HepG2 (cell line): ENCODE measurements at regions of chr16 and their contacts with region 1.

Region 1: DNA sequence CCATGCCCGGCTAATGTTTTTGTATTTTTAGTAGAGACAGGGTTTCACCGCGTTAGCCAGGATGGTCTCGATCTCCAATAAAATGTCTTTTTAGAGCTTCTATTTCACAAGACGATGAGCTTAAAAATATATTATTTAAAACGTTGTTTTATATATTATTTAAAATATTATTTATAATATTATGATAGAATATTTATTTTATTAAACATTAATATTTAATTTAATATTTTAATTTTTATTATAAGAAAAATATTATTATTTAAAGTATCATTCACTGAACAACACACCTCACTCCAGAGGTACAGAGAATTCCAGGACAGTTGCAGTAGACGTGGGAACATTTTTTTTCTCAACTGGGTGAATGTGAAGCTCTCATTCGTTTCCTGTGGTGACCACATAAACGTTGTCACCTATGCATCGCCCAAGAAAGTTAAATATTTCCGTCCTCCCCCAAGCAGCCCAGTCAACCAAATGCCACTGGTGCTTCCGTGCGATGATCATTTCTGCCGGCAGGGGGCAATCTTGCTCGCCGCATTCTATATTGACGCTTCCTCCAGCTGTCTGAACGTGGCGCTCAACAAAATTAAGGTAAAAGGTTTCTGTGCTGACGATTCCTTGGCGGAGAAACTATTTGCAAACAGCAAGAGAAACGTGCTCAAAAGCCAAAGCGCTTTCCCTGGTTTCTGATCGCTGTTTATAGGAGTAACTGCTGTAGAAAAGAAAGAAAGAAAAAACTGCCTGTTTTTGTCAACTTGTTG is 41.7 kb upstream of the PRSS54 start:
- DNase-seq: peak; percentile 78
- ATAC-seq: peak; percentile 87
- H3K4me3 ChIP-seq: peak overlapping the region in 2 of 3 experiments; percentile 30 to 42; a peak in 2 of 6 replicates
- H3K27ac ChIP-seq: no peak overlapping the region
- H3K4me1 ChIP-seq: peaks cover 18% of the 10 kb centered on the region
- H3K27me3 ChIP-seq: no peaks in the 10 kb centered on the region
- CTCF ChIP-seq: peak; percentile 94
- EP300 ChIP-seq: no peak
- POLR2A ChIP-seq: no peak
- RAD21 ChIP-seq: peak; percentile 90

Region 2: DNA sequence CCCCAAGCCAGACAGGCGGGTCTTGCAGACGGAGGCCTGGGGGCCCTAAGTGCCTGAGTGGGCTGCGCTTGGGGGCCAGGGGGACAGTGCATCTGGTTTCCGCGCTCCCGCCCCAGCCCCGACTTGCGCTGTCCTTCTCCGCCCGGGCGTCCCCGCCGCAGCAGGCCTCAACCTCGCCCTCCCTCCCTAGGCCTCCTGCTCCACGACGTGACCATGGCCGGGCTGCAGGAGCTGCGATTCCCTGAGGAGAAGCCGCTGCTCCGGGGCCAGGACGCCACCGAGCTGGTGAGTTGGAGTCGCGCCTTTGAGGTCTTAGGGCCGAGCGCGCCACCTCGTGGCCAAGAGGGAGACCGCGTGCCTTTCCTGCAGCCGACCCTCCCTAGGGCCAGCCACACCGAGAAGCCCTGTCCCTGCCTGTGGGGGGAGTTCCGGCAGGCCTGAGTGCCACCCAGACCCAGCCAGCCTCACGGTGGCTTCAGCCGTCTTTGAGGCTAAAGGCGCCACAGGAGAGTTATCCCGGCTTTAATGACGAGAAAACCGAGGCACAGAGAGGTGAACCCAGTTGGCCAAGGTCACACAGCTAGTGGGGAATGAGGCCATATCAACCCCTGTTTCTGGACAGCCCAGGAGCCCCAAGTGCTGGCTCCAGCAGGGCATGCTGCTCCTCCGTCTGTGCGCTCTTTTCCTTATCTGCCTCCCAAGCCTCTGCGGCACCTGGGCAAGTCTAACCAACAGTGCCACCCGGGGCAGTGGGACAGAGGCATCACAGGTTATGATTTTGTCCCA is 151.2 kb after region 1 on chr16:
- CTCF ChIA-PET with region 1: interaction called, 66 read pairs
- POLR2A ChIA-PET with region 1: interaction called, 4 read pairs
- in situ Hi-C with region 1: loop called (anchors 5 kb)
- intact Hi-C with region 1: loop called (anchors 1 kb)
- DNase-seq: peak; percentile 71
- ATAC-seq: peak; percentile 95
- H3K4me3 ChIP-seq: no peak overlapping the region
- H3K27ac ChIP-seq: no peak overlapping the region
- H3K4me1 ChIP-seq: no peaks in the 10 kb centered on the region
- H3K27me3 ChIP-seq: peaks cover 2 to 14% of the 10 kb centered on the region in 2 experiments; a peak in 3 of 5 replicates
- CTCF ChIP-seq: peak; percentile 100
- EP300 ChIP-seq: no peak
- POLR2A ChIP-seq: no peak
- RAD21 ChIP-seq: peak; percentile 99

Region 3: GRCh38 chr16:58629572-58630104 is 293.1 kb after region 1 on chr16 and contains the start of gene CNOT1:
- CTCF ChIA-PET with region 1: no interaction called
- POLR2A ChIA-PET with region 1: no interaction called
- in situ Hi-C with region 1: loop called (anchors 10 kb)
- intact Hi-C with region 1: no loop called
- DNase-seq: peak; percentile 100
- ATAC-seq: peak; percentile 93
- H3K4me3 ChIP-seq: peak within 1 kb of the TSS; percentile 94 to 100 (median 98)
- H3K27ac ChIP-seq: peak within 1 kb of the TSS; percentile 96
- H3K4me1 ChIP-seq: peaks cover 39% of the 10 kb centered on the region
- H3K27me3 ChIP-seq: no peaks in the 10 kb centered on the region; a peak in 1 of 5 replicates
- CTCF ChIP-seq: no peak
- EP300 ChIP-seq: peak in 1 of 2 experiments; percentile 14; a peak in 1 of 4 replicates
- POLR2A ChIP-seq: peak; percentile 85 to 87
- RAD21 ChIP-seq: no peak
- total RNA-seq, gene CNOT1: 188 and 399 TPM in 2 replicates

Region 4: DNA sequence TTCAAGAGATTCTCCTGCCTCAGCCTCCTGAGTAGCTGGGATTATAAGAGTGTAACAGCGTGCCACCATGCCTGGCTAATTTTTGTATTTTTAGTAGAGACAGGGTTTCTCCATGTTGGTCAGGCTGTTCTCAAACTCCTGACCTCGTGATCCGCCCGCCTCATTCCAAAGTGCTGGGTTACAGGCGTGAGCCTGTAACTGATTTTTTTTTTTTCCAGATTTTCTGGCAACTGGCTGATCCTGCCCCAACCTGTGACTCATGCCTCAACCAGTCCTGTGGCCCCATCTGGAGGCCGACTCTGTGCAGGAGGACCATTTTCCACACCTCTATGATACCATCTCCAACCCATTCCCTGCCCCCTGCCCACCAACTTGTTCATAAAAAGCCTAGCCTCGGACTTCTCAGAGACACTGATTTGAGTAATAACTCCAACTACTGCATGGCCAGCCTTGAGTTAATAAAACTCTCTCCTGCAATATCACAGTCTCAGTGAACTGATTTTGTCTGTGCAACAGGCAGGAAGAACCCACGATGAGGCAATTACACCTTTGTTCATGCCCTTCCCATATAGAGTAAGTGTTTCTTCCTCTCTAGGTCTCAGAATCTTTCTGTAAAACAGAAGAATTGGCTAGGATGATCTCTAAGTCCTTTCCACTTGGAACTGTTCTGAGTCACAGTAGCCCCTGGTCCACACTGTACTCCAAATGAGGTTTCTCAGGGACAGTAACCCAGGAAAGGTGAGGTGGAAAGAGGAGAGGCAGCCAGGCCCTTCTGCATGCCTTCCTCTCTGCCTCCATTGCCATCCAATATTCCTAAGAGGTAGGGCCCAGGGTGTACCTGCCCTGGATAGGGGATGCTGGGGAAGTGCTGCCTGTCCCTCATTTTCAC is 301.9 kb after region 1 on chr16:
- CTCF ChIA-PET with region 1: no interaction called
- POLR2A ChIA-PET with region 1: no interaction called
- in situ Hi-C with region 1: loop called (anchors 10 kb)
- intact Hi-C with region 1: loop called (anchors 5 kb)
- DNase-seq: peak; percentile 79
- ATAC-seq: peak; percentile 94
- H3K4me3 ChIP-seq: no peak overlapping the region
- H3K27ac ChIP-seq: no peak overlapping the region
- H3K4me1 ChIP-seq: peaks cover 50% of the 10 kb centered on the region
- H3K27me3 ChIP-seq: no peaks in the 10 kb centered on the region; a peak in 1 of 5 replicates
- CTCF ChIP-seq: peak; percentile 89
- EP300 ChIP-seq: no peak
- POLR2A ChIP-seq: no peak
- RAD21 ChIP-seq: peak; percentile 88

Region 5: DNA sequence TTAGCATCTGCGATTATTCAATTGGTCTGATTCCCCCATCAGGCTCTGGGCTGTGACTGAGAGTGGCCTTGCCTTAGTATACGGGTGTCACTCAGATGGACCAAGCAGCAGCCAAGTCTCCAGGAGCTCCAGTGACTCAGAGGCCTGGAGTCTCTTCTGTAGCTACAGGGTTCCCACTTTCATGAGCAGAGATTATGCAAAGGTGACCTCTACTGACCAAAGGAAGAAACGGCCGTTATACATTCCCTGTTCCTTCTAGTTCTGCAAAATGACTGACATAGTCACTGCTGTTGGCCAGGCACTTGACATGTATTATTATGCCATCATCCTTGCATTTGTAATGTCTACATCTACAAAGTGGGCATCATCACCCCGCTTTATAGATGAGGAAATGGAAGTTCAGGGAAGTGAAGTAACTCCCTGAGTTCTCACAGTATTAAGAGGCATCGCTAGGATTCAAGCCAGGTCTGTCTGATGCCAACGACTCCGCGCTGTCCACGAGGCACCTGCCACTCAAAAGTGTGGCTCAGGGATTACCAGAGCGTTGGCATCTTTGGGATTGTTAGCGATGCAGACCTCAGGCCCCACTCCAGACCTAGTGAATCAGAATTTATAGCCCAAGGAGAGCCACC is 324.8 kb after region 1 on chr16:
- CTCF ChIA-PET with region 1: no interaction called
- POLR2A ChIA-PET with region 1: no interaction called
- in situ Hi-C with region 1: no loop called
- intact Hi-C with region 1: loop called (anchors 2 kb)
- DNase-seq: peak; percentile 85
- ATAC-seq: peak; percentile 89
- H3K4me3 ChIP-seq: no peak overlapping the region
- H3K27ac ChIP-seq: no peak overlapping the region
- H3K4me1 ChIP-seq: peaks cover 23% of the 10 kb centered on the region
- H3K27me3 ChIP-seq: no peaks in the 10 kb centered on the region
- CTCF ChIP-seq: peak; percentile 93
- EP300 ChIP-seq: no peak
- POLR2A ChIP-seq: no peak
- RAD21 ChIP-seq: peak; percentile 91